BJ (cell line): ENCODE measurements at regions of chr15 and their contacts with region 1.

Region 1: DNA sequence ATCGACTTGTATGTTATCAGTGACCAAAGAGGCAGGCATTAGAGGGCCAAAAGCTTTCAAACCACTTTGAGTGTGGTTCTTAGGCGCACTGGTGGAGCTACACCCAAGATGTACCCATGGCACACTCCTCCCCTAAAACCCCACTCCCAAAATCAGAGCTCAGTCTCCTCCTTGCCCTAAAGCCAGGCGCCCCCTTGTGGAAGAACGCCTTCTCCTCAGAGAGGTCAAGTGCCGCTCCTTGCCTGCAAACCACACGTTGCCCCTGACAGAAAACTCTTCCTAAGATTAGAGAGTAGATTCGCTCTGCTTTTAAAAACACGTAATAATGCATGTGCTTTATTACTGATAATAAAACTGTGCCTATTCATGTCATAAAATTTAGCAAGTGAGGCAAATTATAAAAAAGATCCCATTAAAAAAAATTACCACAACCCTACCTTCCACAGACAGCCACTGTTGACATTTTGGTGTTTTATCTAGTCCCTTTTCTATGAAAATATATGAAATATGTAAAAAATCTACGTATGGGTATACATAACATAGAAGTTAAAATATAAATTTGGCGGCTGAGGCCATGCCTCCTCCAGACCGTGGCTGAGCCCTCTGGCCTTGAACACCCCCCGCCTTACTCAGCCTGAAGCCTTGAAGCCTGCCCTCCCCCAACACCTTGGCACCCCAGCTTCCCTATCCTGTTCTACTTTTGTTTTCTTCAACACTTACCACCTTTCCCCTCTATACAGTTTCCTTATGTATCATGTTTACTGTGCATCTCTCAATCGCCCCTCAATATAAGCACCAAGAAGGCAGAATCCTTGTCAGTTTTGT is 33.5 kb downstream of the BCL2L10 start:
- DNase-seq: no peak
- H3K4me3 ChIP-seq: no peak overlapping the region
- H3K27me3 ChIP-seq: no peaks in the 10 kb centered on the region
- CTCF ChIP-seq: peak; percentile 89

Region 2: GRCh38 chr15:51971375-51972133 is 107.5 kb before region 1 on chr15 and contains the start of gene LEO1:
- CTCF ChIA-PET with region 1: interaction called, 16 read pairs
- POLR2A ChIA-PET with region 1: interaction called, 5 read pairs
- DNase-seq: peak; percentile 70
- H3K4me3 ChIP-seq: peak within 1 kb of the TSS; percentile 68
- H3K27me3 ChIP-seq: no peaks in the 10 kb centered on the region
- CTCF ChIP-seq: peak; percentile 64
- polyA plus RNA-seq, gene LEO1: 1.3 and 4.5 TPM in 2 replicates

Region 3: DNA sequence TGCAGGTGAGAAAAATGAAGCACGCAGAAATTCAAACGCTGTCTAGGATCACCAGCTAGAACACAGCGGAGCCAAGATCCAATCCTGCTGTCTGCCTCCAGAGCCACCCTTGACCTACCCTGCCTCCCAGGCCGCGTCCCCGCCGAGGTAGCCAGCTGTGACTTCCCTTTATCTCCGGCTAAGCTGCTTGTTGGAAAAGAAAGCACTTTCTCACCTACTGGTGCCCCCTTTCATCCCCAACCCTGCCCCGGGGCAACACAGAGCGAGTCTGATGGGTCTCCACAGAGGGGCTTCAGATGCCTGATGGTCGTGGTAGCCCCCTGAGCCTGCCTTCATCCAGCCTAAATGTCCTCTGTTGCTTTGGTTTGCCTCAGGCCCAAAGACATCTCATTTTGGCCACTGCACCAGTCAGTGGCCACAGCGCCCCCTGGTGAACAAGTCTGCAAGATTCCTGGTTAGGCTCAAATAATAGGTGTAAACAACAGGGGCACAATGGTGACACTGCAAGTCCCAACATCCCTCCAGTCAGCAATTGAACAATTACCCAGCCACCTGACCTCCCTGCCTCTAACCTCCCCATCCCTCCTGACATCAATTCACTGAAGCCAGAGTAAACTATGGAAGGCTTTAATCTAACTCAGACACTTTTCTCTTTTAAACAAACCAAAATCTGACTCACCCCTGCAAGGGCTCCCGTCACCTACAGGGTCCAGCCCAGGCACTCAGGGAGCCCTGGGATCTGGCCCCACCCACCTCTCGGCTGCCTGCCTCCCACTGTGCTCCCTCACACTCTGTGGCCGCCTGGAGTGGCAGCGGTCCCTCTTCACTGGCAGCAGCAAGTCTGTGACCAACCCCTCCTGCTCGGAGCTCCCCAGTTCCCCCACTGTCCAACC is 60.8 kb after region 1 on chr15:
- CTCF ChIA-PET with region 1: interaction called, 14 read pairs
- POLR2A ChIA-PET with region 1: no interaction called
- DNase-seq: no peak
- H3K4me3 ChIP-seq: no peak overlapping the region
- H3K27me3 ChIP-seq: no peaks in the 10 kb centered on the region
- CTCF ChIP-seq: peak; percentile 84